ENCODE measurements at regions of chr11 and their contacts with region 1.

Region 1: GRCh38 chr11:95067039-95067840 is 521 bp downstream of the SRSF8 start:
- DNase-seq: peak; percentile 36
- ATAC-seq: peak; percentile 88
- H3K4me3 ChIP-seq: peak overlapping the region; percentile 83 to 90
- H3K27ac ChIP-seq: peak overlapping the region; percentile 94
- H3K4me1 ChIP-seq: peaks cover 8% of the 10 kb centered on the region; the same call in 1 of the 2 replicates
- H3K27me3 ChIP-seq: peaks cover under 1% of the 10 kb centered on the region; the same call in 1 of the 2 replicates
- CTCF ChIP-seq: peak; percentile 64

Region 2: GRCh38 chr11:94533696-94534630 is 533.3 kb before region 1 on chr11:
- CTCF ChIA-PET with region 1: no interaction called
- POLR2A ChIA-PET with region 1: interaction called, 15 read pairs
- in situ Hi-C with region 1: no loop called
- intact Hi-C with region 1: no loop called
- DNase-seq: no peak
- ATAC-seq: no peak
- H3K4me3 ChIP-seq: no peak overlapping the region
- H3K27ac ChIP-seq: no peak overlapping the region
- H3K4me1 ChIP-seq: no peaks in the 10 kb centered on the region
- H3K27me3 ChIP-seq: peaks cover 2% of the 10 kb centered on the region; the same call in 1 of the 2 replicates
- CTCF ChIP-seq: no peak

Region 3: DNA sequence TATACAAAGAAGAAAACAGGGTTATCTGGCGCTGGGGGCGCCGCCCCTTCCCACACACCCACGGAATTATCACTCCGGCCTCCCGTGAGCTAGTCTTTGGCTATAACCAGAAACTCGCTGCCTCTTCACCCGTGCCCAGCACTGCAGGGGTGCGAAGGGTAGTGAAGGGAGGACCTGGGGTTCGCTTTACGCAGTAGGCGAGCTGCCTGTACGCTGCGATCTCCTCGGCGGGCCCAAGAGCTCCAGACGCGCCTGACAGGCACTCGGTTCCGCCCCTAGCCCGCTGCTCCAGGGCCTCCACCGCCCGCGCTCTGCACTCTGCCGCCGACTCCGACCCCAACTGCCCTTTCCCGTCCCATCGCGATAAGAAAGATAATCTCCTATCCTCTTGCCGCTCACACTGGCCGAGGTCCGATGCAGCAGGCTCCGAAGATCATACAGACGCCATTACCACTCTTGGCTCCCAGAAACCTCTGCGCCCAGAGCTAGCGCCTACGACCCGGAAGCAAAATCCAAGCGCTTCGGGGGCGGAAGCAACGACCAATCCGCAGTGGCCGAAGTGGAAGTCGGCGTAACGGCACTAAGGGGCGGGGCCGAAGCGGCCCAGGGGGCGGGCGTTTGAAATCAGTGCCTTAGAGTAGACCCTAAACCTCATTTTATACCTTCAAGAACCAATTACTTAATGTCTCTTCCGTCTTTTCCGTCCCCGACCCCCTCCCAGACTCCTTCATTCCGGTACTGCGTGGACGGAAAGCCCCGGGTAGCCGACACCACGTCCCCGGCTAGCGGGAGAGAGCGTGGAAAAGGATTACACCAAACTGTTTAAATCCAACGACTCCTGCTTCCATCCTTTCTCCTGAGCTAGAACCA is 93.9 kb before region 1 on chr11 and contains the starts of genes CWC15 and KDM4D:
- CTCF ChIA-PET with region 1: interaction called, 3 read pairs
- POLR2A ChIA-PET with region 1: no interaction called
- in situ Hi-C with region 1: no loop called
- intact Hi-C with region 1: loop called (anchors 5 kb)
- DNase-seq: peak; percentile 75
- ATAC-seq: peak; percentile 100
- H3K4me3 ChIP-seq: peak within 1 kb of the TSS; percentile 93
- H3K27ac ChIP-seq: peak within 1 kb of the TSS; percentile 99
- H3K4me1 ChIP-seq: peaks cover 10% of the 10 kb centered on the region; the same call in 1 of the 2 replicates
- H3K27me3 ChIP-seq: no peaks in the 10 kb centered on the region
- CTCF ChIP-seq: no peak
- total RNA-seq, gene CWC15: 58.9 TPM
- total RNA-seq, gene KDM4D: 0.87 TPM

Region 4: DNA sequence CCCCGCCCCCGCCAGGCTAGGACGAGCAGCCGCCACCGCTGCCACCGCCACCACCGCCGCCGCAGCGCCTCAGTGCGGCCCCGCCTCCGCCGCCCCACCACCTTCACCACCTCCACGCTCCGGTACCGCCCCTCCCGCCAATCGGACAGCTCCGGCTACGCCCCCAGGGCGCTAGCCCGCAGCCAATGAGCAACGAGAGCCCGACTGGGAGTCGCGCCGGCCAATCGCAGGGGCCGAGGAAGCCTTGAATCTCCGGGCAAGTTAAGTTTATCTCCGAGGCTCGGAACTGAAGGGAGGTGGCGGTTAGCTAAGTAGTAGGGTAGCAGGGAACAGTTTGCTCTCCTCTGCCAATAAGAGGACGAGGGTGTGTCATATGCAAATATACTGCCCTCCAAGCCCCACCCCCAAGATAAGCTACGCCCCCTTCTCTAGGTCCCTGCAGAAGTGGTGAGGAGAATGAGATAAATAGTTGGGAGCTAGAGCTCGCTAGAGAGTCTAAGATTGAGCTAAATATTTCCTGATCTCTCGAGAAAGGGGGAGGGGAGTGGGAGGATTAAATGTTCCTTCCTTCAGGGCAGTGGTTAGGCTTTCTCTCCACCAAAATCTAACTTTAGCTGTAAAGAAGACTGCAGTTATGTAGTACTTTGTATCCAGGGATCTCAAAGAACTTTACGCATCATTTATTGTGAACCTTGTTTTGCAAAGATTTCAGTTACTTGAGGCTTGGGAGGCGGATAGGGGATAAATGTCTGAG is 164.1 kb after region 1 on chr11 and contains the start of gene SESN3:
- CTCF ChIA-PET with region 1: no interaction called
- POLR2A ChIA-PET with region 1: no interaction called
- in situ Hi-C with region 1: no loop called
- intact Hi-C with region 1: loop called (anchors 10 kb)
- DNase-seq: peak; percentile 48
- ATAC-seq: peak; percentile 98
- H3K4me3 ChIP-seq: peak within 1 kb of the TSS; percentile 63 to 66
- H3K27ac ChIP-seq: no peak within 1 kb of the TSS
- H3K4me1 ChIP-seq: peaks cover 15% of the 10 kb centered on the region
- H3K27me3 ChIP-seq: peaks cover 71% of the 10 kb centered on the region
- CTCF ChIP-seq: no peak
- total RNA-seq, gene SESN3: 1.4 TPM

Region 5: GRCh38 chr11:95764267-95764898 is 697.1 kb after region 1 on chr11:
- CTCF ChIA-PET with region 1: no interaction called
- POLR2A ChIA-PET with region 1: no interaction called
- in situ Hi-C with region 1: no loop called
- intact Hi-C with region 1: loop called (anchors 10 kb)
- DNase-seq: no peak
- ATAC-seq: peak; percentile 76; the same call in 1 of the 2 replicates
- H3K4me3 ChIP-seq: no peak overlapping the region
- H3K27ac ChIP-seq: no peak overlapping the region
- H3K4me1 ChIP-seq: no peaks in the 10 kb centered on the region
- H3K27me3 ChIP-seq: peaks cover 6% of the 10 kb centered on the region; the same call in 1 of the 2 replicates
- CTCF ChIP-seq: peak; percentile 74; the same call in 1 of the 2 replicates